WTC11 (cell line): ENCODE measurements at regions of chr12 and their contacts with region 1.

Region 1: GRCh38 chr12:8544295-8544694 is 3.6 kb upstream of the CLEC4E start:
- DNase-seq: peak; percentile 81
- ATAC-seq: peak; percentile 80
- H3K4me3 Mint-ChIP-seq: no peak overlapping the region
- H3K27ac Mint-ChIP-seq: no peak overlapping the region
- H3K4me1 Mint-ChIP-seq: peaks cover 8% of the 10 kb centered on the region; the same call in 1 of the 2 replicates
- H3K27me3 Mint-ChIP-seq: no peaks in the 10 kb centered on the region; the same call in 1 of the 2 replicates
- CTCF ChIP-seq: peak; percentile 96

Region 2: GRCh38 chr12:8508910-8509847 is 35.1 kb before region 1 on chr12:
- CTCF ChIA-PET with region 1: interaction called, 10 read pairs
- POLR2A ChIA-PET with region 1: no interaction called
- DNase-seq: no peak
- ATAC-seq: peak; percentile 66
- H3K4me3 Mint-ChIP-seq: no peak overlapping the region
- H3K27ac Mint-ChIP-seq: no peak overlapping the region
- H3K4me1 Mint-ChIP-seq: peaks cover 21% of the 10 kb centered on the region
- H3K27me3 Mint-ChIP-seq: no peaks in the 10 kb centered on the region; the same call in 1 of the 2 replicates
- CTCF ChIP-seq: no peak

Region 3: DNA sequence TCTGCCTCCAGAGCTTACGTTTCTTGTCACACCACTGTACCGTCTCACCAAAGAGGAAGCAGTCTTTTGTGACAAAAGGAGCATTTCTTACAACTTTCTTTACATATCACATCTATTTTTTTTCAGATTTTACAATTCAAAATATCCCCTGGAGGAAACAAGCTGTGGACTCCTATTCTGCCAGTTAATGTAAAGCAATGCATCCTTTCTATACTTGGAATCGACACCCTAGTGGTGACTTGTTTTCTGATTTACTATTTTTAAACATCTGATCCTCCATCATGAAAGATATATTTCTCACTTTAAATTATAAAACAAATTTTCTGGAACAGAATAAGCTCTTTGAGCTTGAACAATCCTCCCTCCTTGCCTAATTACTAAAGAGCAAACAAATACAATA is 33.6 kb after region 1 on chr12:
- CTCF ChIA-PET with region 1: interaction called, 15 read pairs
- POLR2A ChIA-PET with region 1: no interaction called
- DNase-seq: no peak
- ATAC-seq: no peak
- H3K4me3 Mint-ChIP-seq: no peak overlapping the region
- H3K27ac Mint-ChIP-seq: no peak overlapping the region
- H3K4me1 Mint-ChIP-seq: 0 out of 2 replicates have a peak, but pooled peaks cover 3% of the 10 kb centered on the region
- H3K27me3 Mint-ChIP-seq: no peaks in the 10 kb centered on the region
- CTCF ChIP-seq: no peak

Region 4: DNA sequence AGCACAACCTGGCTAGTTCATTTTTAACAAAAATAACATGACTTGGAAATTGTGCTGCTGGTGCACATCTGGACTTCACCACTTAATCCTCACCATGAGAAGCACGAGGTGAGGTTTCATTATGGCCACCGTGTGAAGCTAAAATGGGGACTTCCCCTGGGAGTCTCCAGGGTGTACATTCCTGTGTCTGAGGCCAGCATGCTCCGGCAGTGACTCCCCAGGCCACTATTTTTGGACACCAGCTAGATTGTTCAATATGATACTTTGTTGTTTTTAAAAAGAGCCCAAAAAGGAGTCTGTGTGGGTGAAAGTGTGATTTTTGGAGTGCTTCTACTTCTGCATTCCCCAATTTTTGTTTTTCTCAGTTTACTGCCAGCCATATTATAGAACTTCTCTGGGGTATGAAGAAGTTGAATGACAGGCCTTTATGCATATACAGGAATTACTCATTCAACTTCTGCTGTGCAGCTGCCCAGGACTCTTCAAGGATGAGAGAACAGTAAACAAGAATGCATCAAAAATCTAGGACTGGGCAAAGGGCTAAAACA is 85.3 kb after region 1 on chr12:
- CTCF ChIA-PET with region 1: interaction called, 12 read pairs
- POLR2A ChIA-PET with region 1: no interaction called
- DNase-seq: no peak
- ATAC-seq: no peak
- H3K4me3 Mint-ChIP-seq: no peak overlapping the region
- H3K27ac Mint-ChIP-seq: no peak overlapping the region
- H3K4me1 Mint-ChIP-seq: peaks cover 12% of the 10 kb centered on the region
- H3K27me3 Mint-ChIP-seq: peaks cover 14% of the 10 kb centered on the region
- CTCF ChIP-seq: no peak

Region 5: DNA sequence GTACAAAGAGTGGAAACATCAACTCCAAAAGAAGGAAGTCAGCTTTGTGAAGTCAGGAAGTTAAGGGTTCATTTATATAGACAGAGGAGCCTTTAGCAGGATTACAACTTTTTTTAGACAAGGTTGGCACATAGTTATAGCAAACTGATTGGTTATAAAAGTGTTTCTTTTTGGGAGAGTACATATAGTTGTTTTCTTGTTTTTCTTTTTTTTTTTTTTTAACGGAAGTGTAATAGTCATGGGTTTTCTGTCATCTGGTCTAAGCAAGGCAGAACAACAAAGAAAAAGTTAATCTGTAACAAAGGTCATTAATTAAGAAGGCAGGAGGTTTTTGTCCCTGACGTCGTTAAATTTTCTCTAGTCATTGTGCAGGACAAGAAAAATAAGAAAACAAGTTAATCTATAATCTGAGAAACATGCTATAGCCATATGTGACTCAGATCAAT is 131.3 kb after region 1 on chr12:
- CTCF ChIA-PET with region 1: interaction called, 16 read pairs
- POLR2A ChIA-PET with region 1: no interaction called
- DNase-seq: no peak
- ATAC-seq: no peak
- H3K4me3 Mint-ChIP-seq: no peak overlapping the region
- H3K27ac Mint-ChIP-seq: no peak overlapping the region
- H3K4me1 Mint-ChIP-seq: peaks cover 13% of the 10 kb centered on the region
- H3K27me3 Mint-ChIP-seq: no peaks in the 10 kb centered on the region
- CTCF ChIP-seq: no peak

Region 6: GRCh38 chr12:8860165-8860961 is 316.1 kb after region 1 on chr12:
- CTCF ChIA-PET with region 1: interaction called, 26 read pairs
- POLR2A ChIA-PET with region 1: no interaction called
- DNase-seq: peak; percentile 64
- ATAC-seq: peak; percentile 98
- H3K4me3 Mint-ChIP-seq: no peak overlapping the region
- H3K27ac Mint-ChIP-seq: no peak overlapping the region
- H3K4me1 Mint-ChIP-seq: peaks cover 11% of the 10 kb centered on the region
- H3K27me3 Mint-ChIP-seq: no peaks in the 10 kb centered on the region
- CTCF ChIP-seq: peak; percentile 70

Region 7: GRCh38 chr12:9049520-9050133 is 505.3 kb after region 1 on chr12:
- CTCF ChIA-PET with region 1: interaction called, 18 read pairs
- POLR2A ChIA-PET with region 1: no interaction called
- DNase-seq: no peak
- ATAC-seq: peak; percentile 65; the same call in 1 of the 2 replicates
- H3K4me3 Mint-ChIP-seq: no peak overlapping the region
- H3K27ac Mint-ChIP-seq: no peak overlapping the region
- H3K4me1 Mint-ChIP-seq: peaks cover 7% of the 10 kb centered on the region; the same call in 1 of the 2 replicates
- H3K27me3 Mint-ChIP-seq: no peaks in the 10 kb centered on the region
- CTCF ChIP-seq: peak; percentile 24